ENCODE measurements at regions of chr7 and their contacts with region 1.

Region 1: GRCh38 chr7:75914730-75915585 is at the start of gene POR:
- DNase-seq: peak; percentile 97
- H3K4me3 ChIP-seq: peak within 1 kb of the TSS; percentile 64 to 100 (median 86)
- H3K27ac ChIP-seq: peak within 1 kb of the TSS; percentile 87 to 96 (median 94)
- H3K4me1 ChIP-seq: peaks cover 6 to 29% (median 19%) of the 10 kb centered on the region in 4 donors
- H3K27me3 ChIP-seq: no peaks in the 10 kb centered on the region
- CTCF ChIP-seq: peak in 2 of 5 experiments; percentile 10 to 12
- EP300 ChIP-seq: no peak
- POLR2A ChIP-seq: peak; percentile 99
- total RNA-seq, gene POR: 95.9 to 200 (median 149) TPM

Region 2: GRCh38 chr7:75878769-75879611 is 36.0 kb before region 1 on chr7 and contains the start of gene RHBDD2:
- in situ Hi-C with region 1: no loop called
- intact Hi-C with region 1: loop called (anchors 5 kb)
- DNase-seq: peak; percentile 97
- H3K4me3 ChIP-seq: peak within 1 kb of the TSS; percentile 74 to 89 (median 80)
- H3K27ac ChIP-seq: peak within 1 kb of the TSS; percentile 86 to 89 (median 87)
- H3K4me1 ChIP-seq: peaks cover 9 to 23% (median 19%) of the 10 kb centered on the region in 4 donors
- H3K27me3 ChIP-seq: no peaks in the 10 kb centered on the region
- CTCF ChIP-seq: peak in 1 of 5 experiments; percentile 13
- EP300 ChIP-seq: no peak
- POLR2A ChIP-seq: peak; percentile 95
- total RNA-seq, gene RHBDD2: 44.9 to 79.7 (median 63.7) TPM

Region 3: GRCh38 chr7:75966190-75966961 is 51.4 kb after region 1 on chr7:
- in situ Hi-C with region 1: no loop called
- intact Hi-C with region 1: loop called (anchors 10 kb)
- DNase-seq: no peak
- H3K4me3 ChIP-seq: peak overlapping the region in 1 of 4 donors; percentile 14
- H3K27ac ChIP-seq: peak overlapping the region; percentile 79 to 85 (median 82)
- H3K4me1 ChIP-seq: peaks cover 15 to 46% (median 33%) of the 10 kb centered on the region in 4 donors
- H3K27me3 ChIP-seq: no peaks in the 10 kb centered on the region
- CTCF ChIP-seq: no peak
- EP300 ChIP-seq: peak; percentile 93
- POLR2A ChIP-seq: no peak

Region 4: DNA sequence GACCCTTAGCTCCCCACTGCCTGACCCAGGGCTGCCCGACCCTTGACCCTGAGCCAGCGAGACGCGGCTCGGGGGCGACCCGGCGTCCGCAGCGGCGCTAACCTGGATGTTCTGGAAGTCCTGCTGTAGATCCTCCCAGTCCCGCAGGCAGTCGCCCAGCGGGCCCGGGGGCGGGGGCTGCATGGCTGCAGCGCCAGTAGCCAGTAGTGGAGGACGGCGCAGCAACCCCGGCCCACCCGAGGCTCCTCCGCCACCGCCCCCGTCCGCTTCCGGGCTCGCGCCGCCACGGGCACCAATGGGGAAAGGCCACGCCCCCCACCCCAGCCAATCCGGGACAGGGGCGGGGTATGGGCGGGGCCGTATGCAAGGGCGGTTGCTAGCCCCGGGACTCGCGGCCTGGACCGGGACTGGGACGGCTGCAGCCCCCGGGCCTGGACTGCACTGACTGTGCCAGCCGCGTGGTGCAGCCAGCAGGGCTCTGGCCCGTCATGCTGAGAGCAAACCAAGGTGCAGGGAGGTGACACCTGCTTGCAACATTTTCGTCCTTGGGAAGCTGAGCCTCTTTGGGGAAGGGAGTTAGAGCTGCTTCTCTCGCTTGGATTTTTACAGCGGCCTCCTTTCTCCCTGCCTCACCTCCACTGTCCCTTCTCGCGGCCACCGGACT is 79.6 kb after region 1 on chr7 and contains the start of gene TMEM120A:
- in situ Hi-C with region 1: loop called in 1 of 4 experiments (anchors 10 kb)
- intact Hi-C with region 1: loop called (anchors 10 kb)
- DNase-seq: peak; percentile 98
- H3K4me3 ChIP-seq: peak within 1 kb of the TSS; percentile 62 to 90 (median 70)
- H3K27ac ChIP-seq: peak within 1 kb of the TSS; percentile 85 to 96 (median 92)
- H3K4me1 ChIP-seq: peaks cover 6 to 29% (median 17%) of the 10 kb centered on the region in 4 donors
- H3K27me3 ChIP-seq: no peaks in the 10 kb centered on the region
- CTCF ChIP-seq: peak; percentile 27 to 43 (median 33)
- EP300 ChIP-seq: no peak
- POLR2A ChIP-seq: peak; percentile 89
- total RNA-seq, gene TMEM120A: 57.6 to 119 (median 92.0) TPM